ENCODE measurements at regions of chr4 and their contacts with region 1.

Region 1: DNA sequence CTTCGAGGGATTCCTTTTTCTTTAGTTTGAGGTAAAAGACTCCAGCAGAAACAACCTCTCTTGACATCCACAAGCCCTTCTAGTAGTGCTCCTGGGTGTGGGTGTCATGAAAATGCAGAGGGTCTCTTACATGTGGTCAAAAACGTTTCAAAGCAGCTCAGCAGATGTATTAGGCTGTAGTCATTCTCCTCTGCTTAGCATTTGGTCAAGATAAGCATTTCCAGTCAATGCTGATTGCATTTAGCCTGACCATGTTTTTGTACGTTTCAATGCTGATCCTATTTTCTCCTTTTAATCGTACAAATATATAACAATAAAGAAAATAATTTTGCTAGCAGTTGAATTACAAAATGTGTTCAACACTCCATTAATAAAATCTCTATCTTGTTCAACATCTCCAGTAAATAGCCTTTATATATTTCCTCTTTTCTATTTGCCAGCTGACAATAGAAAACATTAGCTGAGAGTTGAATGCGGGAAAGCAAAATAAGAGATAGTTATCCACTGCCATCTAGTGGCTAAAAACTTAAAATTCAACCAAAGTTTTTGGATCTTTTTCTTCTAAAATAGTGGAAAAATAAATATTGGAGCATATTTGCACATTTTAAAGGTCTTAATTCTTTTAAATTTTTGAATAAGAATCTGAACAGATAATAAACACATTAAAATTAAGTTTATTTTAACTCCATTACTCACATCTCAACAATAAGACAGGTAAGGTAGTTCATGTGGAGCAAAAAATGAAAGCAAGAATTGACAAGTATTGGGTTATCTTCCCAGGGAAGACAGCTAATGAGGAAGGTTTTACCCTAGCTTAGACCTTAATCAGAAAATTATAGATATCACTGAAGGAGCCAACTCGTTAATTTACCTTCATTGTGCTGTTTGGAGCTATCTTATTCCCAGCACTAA is 15.2 kb upstream of the PACRGL start:
- DNase-seq: no peak
- H3K4me3 Mint-ChIP-seq: no peak overlapping the region
- H3K27ac Mint-ChIP-seq: no peak overlapping the region
- H3K4me1 Mint-ChIP-seq: no peaks in the 10 kb centered on the region
- H3K27me3 Mint-ChIP-seq: peaks cover 10% of the 10 kb centered on the region

Region 2: GRCh38 chr4:18689308-18690115 is 1995.6 kb before region 1 on chr4:
- CTCF ChIA-PET with region 1: interaction called, 3 read pairs
- POLR2A ChIA-PET with region 1: no interaction called
- intact Hi-C with region 1: loop called (anchors 1 kb)
- DNase-seq: peak; percentile 42
- H3K4me3 Mint-ChIP-seq: no peak overlapping the region
- H3K27ac Mint-ChIP-seq: no peak overlapping the region
- H3K4me1 Mint-ChIP-seq: no peaks in the 10 kb centered on the region
- H3K27me3 Mint-ChIP-seq: peaks cover 2% of the 10 kb centered on the region

Region 3: GRCh38 chr4:20395160-20395773 is 289.8 kb before region 1 on chr4:
- CTCF ChIA-PET with region 1: interaction called, 14 read pairs
- POLR2A ChIA-PET with region 1: no interaction called
- intact Hi-C with region 1: loop called (anchors 2 kb)
- DNase-seq: peak; percentile 23
- H3K4me3 Mint-ChIP-seq: no peak overlapping the region
- H3K27ac Mint-ChIP-seq: no peak overlapping the region
- H3K4me1 Mint-ChIP-seq: no peaks in the 10 kb centered on the region
- H3K27me3 Mint-ChIP-seq: no peaks in the 10 kb centered on the region

Region 4: GRCh38 chr4:20416800-20417199 is 268.3 kb before region 1 on chr4:
- CTCF ChIA-PET with region 1: interaction called, 25 read pairs
- POLR2A ChIA-PET with region 1: no interaction called
- intact Hi-C with region 1: loop called (anchors 1 kb)
- DNase-seq: no peak
- H3K4me3 Mint-ChIP-seq: no peak overlapping the region
- H3K27ac Mint-ChIP-seq: no peak overlapping the region
- H3K4me1 Mint-ChIP-seq: peaks cover 4% of the 10 kb centered on the region
- H3K27me3 Mint-ChIP-seq: no peaks in the 10 kb centered on the region

Region 5: GRCh38 chr4:20422398-20422797 is 262.7 kb before region 1 on chr4:
- CTCF ChIA-PET with region 1: interaction called, 25 read pairs
- POLR2A ChIA-PET with region 1: no interaction called
- intact Hi-C with region 1: loop called (anchors 1 kb)
- DNase-seq: peak; percentile 44
- H3K4me3 Mint-ChIP-seq: no peak overlapping the region
- H3K27ac Mint-ChIP-seq: no peak overlapping the region
- H3K4me1 Mint-ChIP-seq: peaks cover 4% of the 10 kb centered on the region
- H3K27me3 Mint-ChIP-seq: peaks cover 4% of the 10 kb centered on the region

Region 6: GRCh38 chr4:21517460-21517859 is 832.4 kb after region 1 on chr4:
- CTCF ChIA-PET with region 1: no interaction called
- POLR2A ChIA-PET with region 1: no interaction called
- intact Hi-C with region 1: no loop called
- DNase-seq: no peak
- H3K4me3 Mint-ChIP-seq: no peak overlapping the region
- H3K27ac Mint-ChIP-seq: no peak overlapping the region
- H3K4me1 Mint-ChIP-seq: no peaks in the 10 kb centered on the region
- H3K27me3 Mint-ChIP-seq: no peaks in the 10 kb centered on the region

Measured in activated CD4-positive, alpha-beta memory T cell treated with anti-CD3 and anti-CD28 coated beads for 36 hours (primary cell).